ENCODE measurements at regions of chr2 and their contacts with region 1.

Region 1: DNA sequence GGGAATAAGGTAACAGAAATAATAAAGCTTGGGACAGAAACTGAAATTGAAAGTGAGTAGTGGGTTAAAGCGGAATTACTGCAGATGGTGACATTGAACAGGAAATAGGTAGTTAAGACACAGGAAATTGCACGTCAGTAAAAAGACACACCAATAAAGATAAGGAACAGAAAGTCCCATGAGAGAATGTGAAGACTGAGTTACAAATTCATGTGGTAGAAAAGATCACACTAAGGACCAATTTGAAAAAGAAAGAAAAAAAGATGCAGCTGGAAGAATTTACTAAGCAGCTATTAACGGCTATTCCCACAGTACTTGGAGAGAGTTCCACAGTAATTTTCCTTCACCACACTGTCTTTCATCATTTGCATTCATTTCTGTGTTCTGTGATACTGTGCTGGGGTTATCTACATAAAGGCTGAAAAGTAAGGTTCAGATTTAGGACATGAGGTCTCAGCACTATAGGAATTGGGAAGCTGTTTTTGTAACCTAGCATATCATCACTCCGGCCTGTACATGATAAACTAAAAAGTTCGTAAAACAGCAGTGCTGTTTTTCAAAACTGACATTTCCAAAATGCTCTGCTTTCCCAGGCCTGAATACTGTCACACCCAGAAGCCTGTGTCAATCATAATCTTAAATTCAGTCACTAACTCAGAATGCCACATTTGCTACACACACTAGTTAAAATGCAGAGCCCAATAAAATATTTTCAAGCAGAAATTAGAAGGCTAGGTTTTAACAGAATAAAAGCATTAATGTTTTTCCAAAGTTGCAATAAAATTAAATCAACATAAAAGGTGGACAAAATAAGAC is 42.9 kb downstream of the SRBD1 start:
- DNase-seq: peak in 1 of 2 donors; percentile 88
- ATAC-seq: peak; percentile 93 to 97 (median 96)
- H3K4me3 ChIP-seq: peak overlapping the region; percentile 42
- H3K4me3 Mint-ChIP-seq: peak overlapping the region; percentile 71
- H3K27ac ChIP-seq: peak overlapping the region; percentile 99
- H3K27ac Mint-ChIP-seq: peak overlapping the region; percentile 77 to 86
- H3K4me1 ChIP-seq: peaks cover 8% of the 10 kb centered on the region
- H3K4me1 Mint-ChIP-seq: peaks cover 9 to 26% of the 10 kb centered on the region in 2 donors
- H3K27me3 ChIP-seq: no peaks in the 10 kb centered on the region
- H3K27me3 Mint-ChIP-seq: no peaks in the 10 kb centered on the region
- CTCF ChIP-seq: no peak

Region 2: DNA sequence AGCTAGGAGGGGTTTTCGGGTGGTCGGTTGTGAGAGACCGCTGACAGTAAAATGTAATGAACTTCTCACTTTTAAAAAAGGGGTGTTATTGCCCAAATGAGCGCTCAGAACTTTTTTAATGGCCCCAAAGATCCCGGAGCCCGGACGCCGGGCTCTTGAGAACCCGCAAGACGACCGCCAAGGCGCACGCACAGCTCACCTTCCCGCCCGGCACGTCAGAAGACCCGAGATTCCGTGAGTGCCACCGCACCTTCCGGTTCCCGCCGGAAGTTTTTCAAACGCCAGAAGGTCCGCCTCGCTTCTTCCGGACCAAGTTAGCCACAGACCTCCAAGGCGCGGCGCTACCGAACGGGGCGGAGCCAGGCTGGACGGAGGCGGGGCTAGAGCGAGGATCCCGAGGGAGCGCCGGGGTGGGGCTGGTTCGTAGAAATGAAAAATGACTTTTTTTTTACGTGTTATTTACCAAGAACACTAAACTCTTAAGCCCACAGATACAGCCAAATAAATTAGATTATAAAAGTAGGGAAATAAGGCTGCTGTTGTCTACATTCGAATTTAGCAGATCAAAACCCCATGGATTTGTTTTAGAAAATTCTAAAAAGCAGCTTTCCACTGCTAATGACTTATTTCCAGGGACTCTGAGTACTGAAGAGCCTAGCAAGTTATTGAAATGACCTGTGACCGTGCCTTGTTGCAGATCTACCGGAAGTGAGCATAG is 43.0 kb after region 1 on chr2 and contains the start of gene SRBD1:
- intact Hi-C with region 1: loop called (anchors 5 kb)
- DNase-seq: peak; percentile 77 to 93
- ATAC-seq: peak; percentile 87 to 92 (median 89)
- H3K4me3 ChIP-seq: peak within 1 kb of the TSS; percentile 94
- H3K4me3 Mint-ChIP-seq: peak within 1 kb of the TSS; percentile 97
- H3K27ac ChIP-seq: peak within 1 kb of the TSS; percentile 90
- H3K27ac Mint-ChIP-seq: peak within 1 kb of the TSS; percentile 95 to 96
- H3K4me1 ChIP-seq: no peaks in the 10 kb centered on the region
- H3K4me1 Mint-ChIP-seq: peaks cover 18 to 26% of the 10 kb centered on the region in 2 donors
- H3K27me3 ChIP-seq: no peaks in the 10 kb centered on the region
- H3K27me3 Mint-ChIP-seq: no peaks in the 10 kb centered on the region
- CTCF ChIP-seq: no peak
- total RNA-seq, gene SRBD1: 34.5 to 40.0 (median 38.8) TPM

Region 3: DNA sequence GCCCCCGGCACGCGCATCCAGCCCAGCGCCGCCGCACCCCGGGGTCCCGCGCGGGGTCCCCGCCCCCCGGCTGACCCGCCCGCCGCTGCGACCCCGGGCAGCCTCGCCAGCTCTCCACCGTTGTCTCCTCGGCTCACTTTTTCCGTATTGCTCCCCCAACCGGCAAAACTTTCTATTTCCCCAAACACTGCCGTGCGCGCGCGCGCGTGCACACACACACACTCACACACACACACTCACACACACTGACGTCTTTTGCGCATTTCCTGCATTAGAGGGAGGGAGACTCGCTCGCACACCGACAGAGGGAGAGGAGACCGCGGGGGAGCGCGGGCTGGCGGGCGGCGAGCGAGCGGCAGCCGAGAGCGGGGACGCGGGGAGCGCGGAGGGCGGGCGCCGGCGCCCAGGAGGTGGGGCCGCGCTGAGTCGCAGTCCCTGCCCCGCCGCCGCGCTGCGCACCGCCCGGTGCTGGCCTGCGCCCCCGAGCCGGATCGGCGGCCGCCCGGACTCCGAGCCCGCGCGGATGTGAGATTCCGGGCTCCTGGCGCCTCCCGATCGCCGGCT is 82.8 kb after region 1 on chr2:
- intact Hi-C with region 1: loop called (anchors 1 kb)
- DNase-seq: peak; percentile 89 to 99
- ATAC-seq: peak; percentile 83 to 96 (median 90)
- H3K4me3 ChIP-seq: peak overlapping the region; percentile 72
- H3K4me3 Mint-ChIP-seq: peak overlapping the region; percentile 90
- H3K27ac ChIP-seq: peak overlapping the region; percentile 66
- H3K27ac Mint-ChIP-seq: peak overlapping the region; percentile 81 to 95
- H3K4me1 ChIP-seq: peaks cover 19% of the 10 kb centered on the region
- H3K4me1 Mint-ChIP-seq: peaks cover 28 to 35% of the 10 kb centered on the region in 2 donors
- H3K27me3 ChIP-seq: no peaks in the 10 kb centered on the region
- H3K27me3 Mint-ChIP-seq: no peaks in the 10 kb centered on the region
- CTCF ChIP-seq: no peak

Measured in natural killer cell (primary cell).